Ascending aorta (tissue), 2 donors: ENCODE measurements at regions of chr9 and their contacts with region 1.

Region 1: DNA sequence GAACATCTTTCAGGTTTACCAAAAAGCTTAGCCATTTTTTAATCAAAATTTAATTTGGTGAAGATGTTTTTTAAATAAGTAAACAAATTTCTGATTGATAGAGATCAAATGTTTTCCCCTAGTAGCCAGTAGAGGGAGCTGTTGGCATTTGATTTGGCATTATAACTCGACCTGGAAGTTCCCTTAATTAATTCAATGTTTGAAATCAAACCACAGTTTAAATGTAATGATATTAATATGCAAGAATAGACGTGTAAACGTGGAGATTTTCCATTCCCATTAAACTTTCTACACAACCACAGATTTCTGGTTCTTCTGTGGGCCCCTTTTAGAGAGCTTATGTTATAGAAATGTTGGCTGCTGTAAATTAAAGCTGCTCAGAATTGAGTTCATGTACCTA is 148.1 kb upstream of the MPDZ start:
- DNase-seq: no peak
- H3K4me3 ChIP-seq: no peak overlapping the region
- H3K27ac ChIP-seq: no peak overlapping the region
- H3K4me1 ChIP-seq: no peaks in the 10 kb centered on the region
- H3K27me3 ChIP-seq: no peaks in the 10 kb centered on the region
- CTCF ChIP-seq: peak; percentile 52 to 79 (median 68)

Region 2: DNA sequence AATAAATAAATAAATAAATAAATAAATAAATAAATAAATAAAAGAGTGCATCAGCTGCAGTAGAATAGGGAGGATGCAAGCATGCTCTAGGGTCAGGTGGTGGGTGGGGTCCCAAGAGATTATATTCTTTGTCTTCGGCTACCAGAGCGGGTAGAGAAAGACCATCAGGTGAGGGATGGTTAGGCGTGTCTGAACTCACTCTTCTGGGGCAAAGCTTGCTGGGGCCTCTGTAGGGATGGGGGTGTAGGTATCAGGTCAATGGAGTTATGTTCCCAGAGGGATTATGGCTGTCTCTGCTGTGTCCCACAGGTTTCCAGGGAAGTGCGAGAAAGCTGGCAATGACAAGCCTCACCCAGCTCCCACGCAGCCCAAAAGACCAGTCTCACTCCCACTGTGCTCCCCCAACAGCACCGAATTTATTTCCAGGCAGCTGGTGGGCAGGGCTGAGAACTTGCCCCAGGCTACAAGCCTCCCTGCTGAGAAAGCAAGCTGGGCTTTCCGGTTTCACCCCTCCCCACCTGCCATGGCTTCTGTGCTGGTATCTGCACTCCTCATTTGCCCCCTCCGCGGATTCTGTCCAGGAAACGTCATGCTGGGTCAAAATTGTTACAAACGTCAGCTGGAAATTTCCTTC is 471.9 kb before region 1 on chr9:
- intact Hi-C with region 1: no loop called
- DNase-seq: no peak
- H3K4me3 ChIP-seq: no peak overlapping the region
- H3K27ac ChIP-seq: no peak overlapping the region
- H3K4me1 ChIP-seq: no peaks in the 10 kb centered on the region
- H3K27me3 ChIP-seq: no peaks in the 10 kb centered on the region
- CTCF ChIP-seq: no peak

Region 3: DNA sequence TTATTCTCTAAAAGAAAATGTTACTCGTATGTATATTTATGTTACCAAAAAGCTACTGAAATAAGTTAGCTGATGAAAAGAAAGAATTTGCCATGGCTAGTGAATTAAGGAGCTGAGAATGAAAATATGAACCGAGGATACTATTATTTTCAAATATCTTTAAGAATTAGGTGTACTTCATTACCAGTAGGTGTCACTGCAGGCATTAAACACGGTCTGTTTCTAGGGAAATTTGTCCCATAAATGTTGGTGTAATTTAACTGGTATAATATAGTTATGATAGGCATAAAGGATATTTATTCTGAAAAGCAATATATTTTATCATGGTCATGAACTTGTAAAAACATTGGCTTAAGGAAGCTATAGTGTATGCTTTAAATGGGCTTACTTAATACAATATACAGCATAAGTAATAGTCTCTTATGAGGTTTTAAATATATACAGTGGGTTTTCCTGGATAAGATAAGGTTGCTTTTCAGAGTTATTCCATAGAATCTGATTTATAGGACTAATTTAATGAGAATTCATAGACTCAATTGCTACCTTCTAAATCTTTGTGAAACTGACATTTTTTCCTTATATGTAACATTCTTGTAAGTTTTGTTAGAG is 75.7 kb before region 1 on chr9:
- intact Hi-C with region 1: loop called (anchors 5 kb)
- DNase-seq: no peak
- H3K4me3 ChIP-seq: no peak overlapping the region
- H3K27ac ChIP-seq: no peak overlapping the region
- H3K4me1 ChIP-seq: no peaks in the 10 kb centered on the region
- H3K27me3 ChIP-seq: no peaks in the 10 kb centered on the region
- CTCF ChIP-seq: peak; percentile 36 to 62 (median 45)

Region 4: DNA sequence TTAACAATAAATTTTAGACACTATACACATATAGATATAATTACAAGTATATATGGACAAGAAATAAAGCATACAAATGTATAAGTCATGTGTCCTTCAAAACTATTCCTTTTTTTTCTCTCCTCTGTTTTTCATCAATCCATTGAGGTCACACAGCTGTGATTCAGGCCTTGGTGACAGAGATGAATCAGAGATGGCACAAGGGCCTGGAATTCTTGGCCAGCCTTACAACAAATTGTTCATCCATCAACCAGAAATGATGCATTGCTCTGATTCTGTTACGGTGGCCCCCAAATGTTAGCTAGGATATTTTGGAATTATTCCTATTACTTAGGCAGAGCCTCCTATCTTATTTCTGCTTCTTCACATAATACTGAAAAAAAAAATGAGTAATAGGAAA is 39.4 kb before region 1 on chr9:
- intact Hi-C with region 1: no loop called
- DNase-seq: peak in 1 of 2 donors; percentile 72
- H3K4me3 ChIP-seq: no peak overlapping the region
- H3K27ac ChIP-seq: peak overlapping the region in 1 of 2 donors; percentile 38
- H3K4me1 ChIP-seq: peaks cover 0 to 5% of the 10 kb centered on the region in 2 donors
- H3K27me3 ChIP-seq: no peaks in the 10 kb centered on the region
- CTCF ChIP-seq: no peak

Region 5: DNA sequence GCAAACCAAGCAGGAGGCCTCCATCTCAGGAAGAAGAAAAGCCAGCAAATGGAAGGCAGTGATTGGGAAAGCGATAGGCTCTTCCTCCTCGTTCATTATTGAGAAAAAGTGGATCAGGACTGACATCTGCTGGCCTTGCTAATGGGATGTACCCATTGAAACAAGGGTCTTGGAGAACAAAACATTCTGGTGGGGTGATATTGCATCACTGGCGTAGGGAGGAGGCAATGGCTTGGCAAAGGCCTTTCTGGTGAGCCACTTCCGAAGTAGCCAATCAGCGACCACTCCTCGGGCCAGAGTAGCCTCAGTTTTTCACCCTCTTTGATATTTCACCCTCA is 973.0 kb after region 1 on chr9:
- intact Hi-C with region 1: loop called (anchors 2 kb)
- DNase-seq: peak in 1 of 2 donors; percentile 73
- H3K4me3 ChIP-seq: peak overlapping the region in 1 of 2 donors; percentile 15
- H3K27ac ChIP-seq: no peak overlapping the region
- H3K4me1 ChIP-seq: no peaks in the 10 kb centered on the region
- H3K27me3 ChIP-seq: no peaks in the 10 kb centered on the region
- CTCF ChIP-seq: peak; percentile 38 to 67 (median 53)